AG04449 (cell line): ENCODE measurements at regions of chr6 and their contacts with region 1.

Region 1: DNA sequence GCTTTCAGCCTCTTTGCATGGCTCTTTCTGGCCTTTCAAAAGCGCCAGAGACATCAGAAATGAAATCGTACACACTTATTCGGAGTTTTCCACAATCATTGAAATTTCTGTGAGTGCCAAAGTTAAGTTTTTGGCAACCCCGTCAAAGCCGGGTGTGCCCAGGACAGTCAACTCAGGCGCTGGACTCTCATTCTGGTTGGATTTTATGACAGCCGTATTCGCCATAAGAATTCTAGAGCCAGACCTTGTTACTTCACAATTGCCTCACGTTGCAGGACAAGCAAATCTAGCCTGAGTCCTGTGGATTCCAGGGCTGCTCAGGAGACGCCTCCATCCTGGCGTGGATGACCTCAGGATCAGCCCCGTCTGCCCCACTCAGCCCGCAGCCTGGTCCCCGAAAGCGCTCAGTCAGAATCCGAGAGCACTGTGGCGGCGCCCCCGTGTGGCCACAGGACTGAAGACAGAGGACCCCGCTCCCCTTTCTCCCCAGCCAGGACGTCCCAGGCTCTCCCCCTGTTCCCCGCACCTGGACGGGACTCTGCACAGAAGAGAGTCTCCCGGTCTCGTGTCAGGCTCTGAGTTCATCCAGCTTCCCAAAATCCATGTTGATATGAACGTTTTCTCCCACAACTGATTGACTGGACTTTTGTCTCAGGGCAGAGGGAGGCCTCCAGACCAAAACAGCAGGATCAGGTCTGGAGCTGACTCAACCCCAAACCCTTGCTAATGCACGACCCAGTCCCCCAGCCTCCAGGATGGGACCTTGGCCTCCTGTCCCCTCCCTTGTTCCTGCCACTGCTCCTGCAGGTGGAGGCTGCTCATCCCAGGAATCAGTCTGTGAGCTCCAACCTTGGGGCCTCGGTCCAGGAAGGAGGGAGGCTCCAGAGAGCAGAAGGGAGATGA is 38.2 kb downstream of the MICA start:
- DNase-seq: no peak
- H3K4me3 ChIP-seq: peak overlapping the region; percentile 36
- CTCF ChIP-seq: peak; percentile 94

Region 2: DNA sequence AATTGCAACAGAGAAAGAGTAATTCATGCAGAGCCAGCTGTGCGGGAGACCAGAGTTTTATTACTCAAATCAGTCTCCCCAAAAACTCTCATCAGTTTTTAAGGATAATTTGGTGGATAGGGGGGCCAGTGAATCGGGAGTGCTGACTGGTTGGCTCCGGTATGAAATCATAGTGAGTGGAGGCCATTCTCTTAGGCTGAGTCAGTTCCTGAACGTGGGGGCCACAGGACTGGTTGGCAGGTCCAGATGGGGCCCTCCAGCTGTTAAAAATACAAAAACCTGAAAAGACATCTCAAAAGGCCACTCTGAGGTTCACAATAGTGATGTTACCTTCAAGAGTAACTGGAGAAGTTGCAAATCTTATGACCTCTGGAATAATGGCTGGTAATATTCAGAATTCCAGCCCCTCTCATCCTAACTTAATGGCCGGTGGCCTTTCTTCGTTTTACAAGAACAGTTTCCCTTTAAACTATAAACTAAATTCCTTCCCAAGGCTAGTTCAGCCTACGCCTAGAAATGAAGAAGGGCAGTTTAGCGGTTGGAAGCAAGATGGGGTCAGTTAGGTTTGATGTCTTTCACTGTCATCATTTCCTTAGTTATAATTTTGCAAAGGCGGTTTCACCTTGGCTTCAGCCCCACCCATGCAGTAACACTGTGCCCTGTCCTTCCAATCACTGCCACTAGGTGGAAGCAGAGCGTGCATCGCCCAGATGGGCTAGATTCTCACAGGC is 45.0 kb before region 1 on chr6:
- CTCF ChIA-PET with region 1: interaction called, 121 read pairs
- POLR2A ChIA-PET with region 1: no interaction called
- DNase-seq: no peak
- H3K4me3 ChIP-seq: no peak overlapping the region
- CTCF ChIP-seq: peak; percentile 82

Region 3: GRCh38 chr6:31403283-31403989 is 38.2 kb before region 1 on chr6 and contains the start of gene MICA:
- CTCF ChIA-PET with region 1: interaction called, 121 read pairs
- POLR2A ChIA-PET with region 1: no interaction called
- DNase-seq: peak; percentile 21
- H3K4me3 ChIP-seq: peak within 1 kb of the TSS; percentile 83
- CTCF ChIP-seq: no peak

Region 4: DNA sequence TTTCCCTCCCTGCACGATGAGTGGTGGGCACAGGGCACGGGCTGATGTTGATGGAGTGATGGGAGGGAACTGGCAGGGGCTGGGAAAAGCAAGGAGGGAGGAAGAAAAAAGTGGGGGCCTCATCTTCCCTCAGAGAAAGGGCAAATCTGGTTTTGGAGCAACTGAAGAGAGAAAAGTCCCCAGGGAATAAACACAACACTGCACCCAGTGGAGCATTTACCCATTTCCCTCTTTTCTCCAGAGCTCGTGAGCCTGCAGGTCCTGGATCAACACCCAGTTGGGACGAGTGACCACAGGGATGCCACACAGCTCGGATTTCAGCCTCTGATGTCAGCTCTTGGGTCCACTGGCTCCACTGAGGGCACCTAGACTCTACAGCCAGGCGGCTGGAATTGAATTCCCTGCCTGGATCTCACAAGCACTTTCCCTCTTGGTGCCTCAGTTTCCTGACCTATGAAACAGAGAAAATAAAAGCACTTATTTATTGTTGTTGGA is 26.8 kb before region 1 on chr6:
- CTCF ChIA-PET with region 1: interaction called, 15 read pairs
- POLR2A ChIA-PET with region 1: no interaction called
- DNase-seq: no peak
- H3K4me3 ChIP-seq: no peak overlapping the region
- CTCF ChIP-seq: no peak

Region 5: DNA sequence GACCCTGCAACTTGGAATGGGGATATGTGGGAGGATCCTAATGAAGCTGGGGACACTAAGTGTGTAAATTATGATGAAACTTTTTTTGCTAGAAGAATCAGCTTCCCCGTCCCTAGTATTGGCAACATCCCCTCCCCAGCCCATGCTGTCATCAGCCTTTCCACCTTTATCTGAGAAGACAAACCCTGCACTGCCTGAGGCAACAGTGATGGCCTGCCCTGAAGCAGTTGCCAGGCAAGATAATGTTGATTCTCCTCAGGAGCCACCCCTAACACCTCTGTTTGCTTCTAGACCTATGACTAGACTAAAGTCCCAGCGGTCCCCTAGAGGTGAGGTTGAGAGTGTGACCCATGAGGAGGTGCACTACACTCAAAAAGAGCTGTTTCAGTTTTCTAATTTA is 11.2 kb before region 1 on chr6:
- CTCF ChIA-PET with region 1: interaction called, 21 read pairs
- POLR2A ChIA-PET with region 1: no interaction called
- DNase-seq: no peak
- H3K4me3 ChIP-seq: no peak overlapping the region
- CTCF ChIP-seq: no peak

Region 6: GRCh38 chr6:31729515-31729978 is 287.9 kb after region 1 on chr6:
- CTCF ChIA-PET with region 1: no interaction called
- POLR2A ChIA-PET with region 1: no interaction called
- DNase-seq: no peak
- H3K4me3 ChIP-seq: peak overlapping the region; percentile 89
- CTCF ChIP-seq: peak; percentile 72